ENCODE measurements at regions of chr6 and their contacts with region 1.

Region 1: DNA sequence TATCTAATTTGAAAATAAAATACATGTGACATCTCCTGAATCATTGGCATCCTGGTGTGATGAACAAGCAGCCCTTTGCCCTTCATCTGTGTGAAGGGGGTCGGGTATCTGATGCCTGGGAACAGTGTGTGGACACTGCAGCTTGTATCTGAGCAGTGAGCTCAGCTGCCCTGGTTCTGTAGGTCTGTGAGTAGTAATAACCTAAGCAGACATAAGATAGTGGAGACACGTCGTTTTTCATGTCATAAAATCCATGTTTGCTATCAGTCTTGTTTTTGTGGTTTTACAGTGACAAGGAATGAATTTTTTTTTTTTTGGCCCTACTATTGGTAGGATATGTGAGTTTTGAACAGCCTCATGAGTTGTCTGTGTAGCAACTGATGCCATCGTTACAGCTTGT is 133.0 kb downstream of the JARID2 start:
- DNase-seq: peak in 2 of 4 experiments; percentile 42 to 48
- ATAC-seq: peak; percentile 71
- H3K4me3 ChIP-seq: no peak overlapping the region
- H3K27ac ChIP-seq: no peak overlapping the region
- H3K4me1 ChIP-seq: peaks cover 0 to 22% of the 10 kb centered on the region in 2 experiments; a peak in 3 of 5 replicates
- H3K27me3 ChIP-seq: no peaks in the 10 kb centered on the region
- CTCF ChIP-seq: no peak
- EP300 ChIP-seq: peak; percentile 35; the same call in 1 of the 2 replicates
- POLR2A ChIP-seq: no peak
- RAD21 ChIP-seq: no peak

Region 2: DNA sequence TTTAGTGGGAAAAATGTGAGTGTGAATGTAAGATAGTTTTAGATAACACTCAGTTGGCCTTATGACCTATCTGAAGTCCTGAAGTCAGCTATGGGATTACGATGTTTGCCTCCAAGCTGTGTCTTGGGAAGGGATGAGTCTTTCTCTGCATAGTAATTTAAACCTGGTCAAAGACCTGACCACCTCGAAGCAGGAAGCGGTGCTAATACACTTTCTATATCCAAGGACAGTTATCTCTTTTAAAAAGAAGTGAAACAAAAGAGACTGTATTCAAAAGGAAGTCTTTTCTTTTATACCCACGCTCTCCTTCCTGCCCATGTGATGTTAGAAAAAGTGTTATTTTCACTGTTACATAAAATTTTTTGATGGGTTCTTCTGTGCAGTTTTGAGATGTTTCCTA is 38.1 kb before region 1 on chr6:
- CTCF ChIA-PET with region 1: no interaction called
- POLR2A ChIA-PET with region 1: interaction called, 4 read pairs
- in situ Hi-C with region 1: no loop called
- intact Hi-C with region 1: loop called (anchors 5 kb)
- DNase-seq: no peak
- ATAC-seq: 0 out of 3 replicates have a peak, but pooled peaks have one; percentile 7
- H3K4me3 ChIP-seq: no peak overlapping the region
- H3K27ac ChIP-seq: peak overlapping the region; percentile 10; the same call in 2 of the 3 replicates
- H3K4me1 ChIP-seq: peaks cover 27 to 64% of the 10 kb centered on the region in 2 experiments
- H3K27me3 ChIP-seq: no peaks in the 10 kb centered on the region
- CTCF ChIP-seq: no peak; a peak in 1 of 6 replicates
- EP300 ChIP-seq: no peak
- POLR2A ChIP-seq: no peak
- RAD21 ChIP-seq: no peak